Thyroid gland (tissue), 4 donors: ENCODE measurements at regions of chr3 and their contacts with region 1.

Region 1: GRCh38 chr3:52339612-52340011 is 23.5 kb downstream of the DNAH1 start:
- DNase-seq: peak; percentile 26 to 32
- H3K4me3 ChIP-seq: no peak overlapping the region
- H3K27ac ChIP-seq: no peak overlapping the region
- H3K4me1 ChIP-seq: peaks cover 7 to 11% of the 10 kb centered on the region in 2 donors
- H3K27me3 ChIP-seq: no peaks in the 10 kb centered on the region
- CTCF ChIP-seq: peak in 5 of 6 experiments; percentile 55 to 98 (median 68)
- POLR2A ChIP-seq: no peak

Region 2: GRCh38 chr3:52231502-52232293 is 107.9 kb before region 1 on chr3:
- intact Hi-C with region 1: loop called (anchors 5 kb)
- DNase-seq: peak; percentile 60 to 72
- H3K4me3 ChIP-seq: no peak overlapping the region
- H3K27ac ChIP-seq: no peak overlapping the region
- H3K4me1 ChIP-seq: peaks cover 3 to 6% of the 10 kb centered on the region in 2 donors
- H3K27me3 ChIP-seq: no peaks in the 10 kb centered on the region
- CTCF ChIP-seq: peak; percentile 63 to 82 (median 78)
- POLR2A ChIP-seq: no peak

Region 3: DNA sequence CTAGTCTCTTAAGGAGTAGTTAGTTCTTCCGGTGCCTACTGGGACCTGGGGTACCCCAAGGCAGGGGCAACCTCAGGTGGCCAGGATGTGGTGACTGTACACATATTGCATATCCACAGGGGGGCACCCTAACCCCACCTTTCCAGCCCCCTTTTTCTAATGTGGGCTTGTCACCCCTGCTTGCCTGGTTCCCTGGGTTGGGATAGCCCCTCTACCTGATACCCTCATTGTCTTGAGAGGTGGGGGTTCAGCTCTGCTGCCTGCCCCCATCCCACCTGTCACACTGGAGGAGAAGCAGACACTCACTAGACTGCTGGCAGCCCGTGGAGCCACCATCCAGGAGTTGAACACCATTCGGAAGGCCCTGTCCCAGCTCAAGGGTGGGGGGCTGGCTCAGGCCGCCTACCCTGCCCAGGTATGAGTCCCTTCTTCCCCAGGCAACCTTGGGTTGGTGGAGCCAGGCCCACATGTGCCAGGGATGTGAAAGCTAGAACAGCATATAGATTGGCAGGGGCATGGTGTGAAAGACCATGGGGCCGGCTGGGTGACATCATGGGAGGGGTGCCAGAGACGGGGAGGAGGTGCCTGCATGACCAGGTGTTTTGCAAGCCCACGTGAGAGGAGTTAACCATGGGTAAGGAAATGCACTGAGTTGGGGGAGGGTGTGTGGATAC is 48.0 kb before region 1 on chr3:
- intact Hi-C with region 1: loop called (anchors 5 kb)
- DNase-seq: peak; percentile 20 to 22
- H3K4me3 ChIP-seq: no peak overlapping the region
- H3K27ac ChIP-seq: no peak overlapping the region
- H3K4me1 ChIP-seq: peaks cover 8 to 13% of the 10 kb centered on the region in 2 donors
- H3K27me3 ChIP-seq: no peaks in the 10 kb centered on the region
- CTCF ChIP-seq: peak in 4 of 6 experiments; percentile 26 to 55 (median 44)
- POLR2A ChIP-seq: no peak